ENCODE measurements at regions of chr16 and their contacts with region 1.

Region 1: GRCh38 chr16:28924732-28925385 is at the start of gene RABEP2:
- DNase-seq: peak; percentile 99
- ATAC-seq: peak; percentile 64
- H3K4me3 Mint-ChIP-seq: peak within 1 kb of the TSS; percentile 90
- H3K27ac Mint-ChIP-seq: peak within 1 kb of the TSS; percentile 96
- H3K4me1 Mint-ChIP-seq: peaks cover 54% of the 10 kb centered on the region
- H3K27me3 Mint-ChIP-seq: no peaks in the 10 kb centered on the region
- CTCF ChIP-seq: no peak
- total RNA-seq, gene RABEP2: 93.5 and 110 TPM in 2 replicates

Region 2: GRCh38 chr16:28846080-28846932 is 78.6 kb before region 1 on chr16 and contains the start of gene TUFM:
- CTCF ChIA-PET with region 1: no interaction called
- POLR2A ChIA-PET with region 1: interaction called, 31 read pairs
- intact Hi-C with region 1: loop called (anchors 1 kb)
- DNase-seq: peak; percentile 96
- ATAC-seq: peak; percentile 97
- H3K4me3 Mint-ChIP-seq: peak within 1 kb of the TSS; percentile 95
- H3K27ac Mint-ChIP-seq: peak within 1 kb of the TSS; percentile 90
- H3K4me1 Mint-ChIP-seq: peaks cover 28% of the 10 kb centered on the region
- H3K27me3 Mint-ChIP-seq: no peaks in the 10 kb centered on the region
- CTCF ChIP-seq: no peak
- total RNA-seq, gene TUFM: 189 and 206 TPM in 2 replicates

Region 3: DNA sequence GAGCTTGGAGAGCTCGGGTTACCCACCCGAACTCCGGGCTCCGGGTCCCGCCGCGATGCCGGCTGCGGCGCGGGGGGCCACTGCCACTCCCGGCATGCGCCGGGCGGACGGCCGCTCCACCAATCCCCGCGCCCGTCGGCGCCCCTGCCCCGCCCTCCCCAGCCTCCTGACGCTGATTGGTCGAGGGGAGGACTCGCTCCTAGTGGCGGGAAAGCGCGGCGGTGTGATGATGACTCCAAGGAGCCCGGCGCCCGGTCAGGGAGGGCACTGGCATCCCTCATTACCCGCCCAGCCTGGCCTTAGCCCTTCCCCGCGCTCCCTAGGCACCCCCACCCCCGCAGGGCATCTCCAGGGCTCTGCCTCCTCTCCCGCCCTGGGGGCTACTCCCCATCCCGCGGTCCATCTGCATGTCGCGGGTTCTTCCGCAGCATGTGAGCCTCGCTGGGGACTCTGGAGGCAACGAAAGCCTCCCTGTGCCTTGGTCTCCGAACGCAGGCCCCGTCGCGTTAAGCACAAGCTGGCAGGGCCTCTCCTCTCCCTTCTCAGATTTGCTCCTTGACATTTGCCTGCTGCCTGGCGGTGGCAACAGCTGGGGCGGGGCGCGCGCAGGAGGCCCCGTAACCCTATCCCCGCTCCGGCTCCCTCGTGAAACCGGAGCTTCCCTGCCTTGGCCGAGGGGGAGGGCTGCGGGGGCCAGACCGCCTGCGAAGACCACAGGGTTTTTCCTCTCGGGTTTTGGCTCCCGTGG is 44.8 kb before region 1 on chr16:
- CTCF ChIA-PET with region 1: interaction called, 10 read pairs
- POLR2A ChIA-PET with region 1: interaction called, 22 read pairs
- intact Hi-C with region 1: loop called (anchors 2 kb)
- DNase-seq: peak; percentile 71
- ATAC-seq: peak; percentile 98
- H3K4me3 Mint-ChIP-seq: peak overlapping the region; percentile 89
- H3K27ac Mint-ChIP-seq: peak overlapping the region; percentile 59
- H3K4me1 Mint-ChIP-seq: peaks cover 14% of the 10 kb centered on the region
- H3K27me3 Mint-ChIP-seq: peaks cover 5% of the 10 kb centered on the region
- CTCF ChIP-seq: no peak

Region 4: GRCh38 chr16:28935924-28936783 is 11.3 kb after region 1 on chr16:
- CTCF ChIA-PET with region 1: interaction called, 8 read pairs
- POLR2A ChIA-PET with region 1: interaction called, 192 read pairs
- intact Hi-C with region 1: loop called (anchors 1 kb)
- DNase-seq: peak; percentile 74
- ATAC-seq: peak; percentile 92
- H3K4me3 Mint-ChIP-seq: peak overlapping the region; percentile 67
- H3K27ac Mint-ChIP-seq: peak overlapping the region; percentile 77
- H3K4me1 Mint-ChIP-seq: peaks cover 59% of the 10 kb centered on the region
- H3K27me3 Mint-ChIP-seq: no peaks in the 10 kb centered on the region
- CTCF ChIP-seq: no peak

Region 5: GRCh38 chr16:28974437-28975157 is 49.7 kb after region 1 on chr16 and contains the start of gene SPNS1:
- CTCF ChIA-PET with region 1: no interaction called
- POLR2A ChIA-PET with region 1: interaction called, 18 read pairs
- intact Hi-C with region 1: no loop called
- DNase-seq: peak; percentile 91
- ATAC-seq: peak; percentile 91
- H3K4me3 Mint-ChIP-seq: peak within 1 kb of the TSS; percentile 94
- H3K27ac Mint-ChIP-seq: peak within 1 kb of the TSS; percentile 94
- H3K4me1 Mint-ChIP-seq: peaks cover 31% of the 10 kb centered on the region
- H3K27me3 Mint-ChIP-seq: no peaks in the 10 kb centered on the region
- CTCF ChIP-seq: no peak
- total RNA-seq, gene SPNS1: 26.6 and 29.2 TPM in 2 replicates

Region 6: GRCh38 chr16:29148867-29149272 is 224.0 kb after region 1 on chr16:
- CTCF ChIA-PET with region 1: no interaction called
- POLR2A ChIA-PET with region 1: no interaction called
- intact Hi-C with region 1: no loop called
- DNase-seq: no peak
- ATAC-seq: peak; percentile 73
- H3K4me3 Mint-ChIP-seq: peak overlapping the region; percentile 32
- H3K27ac Mint-ChIP-seq: no peak overlapping the region
- H3K4me1 Mint-ChIP-seq: peaks cover 17% of the 10 kb centered on the region
- H3K27me3 Mint-ChIP-seq: no peaks in the 10 kb centered on the region
- CTCF ChIP-seq: no peak

Region 7: GRCh38 chr16:29645694-29646187 is 720.9 kb after region 1 on chr16:
- CTCF ChIA-PET with region 1: no interaction called
- POLR2A ChIA-PET with region 1: no interaction called
- intact Hi-C with region 1: no loop called
- DNase-seq: no peak
- ATAC-seq: peak; percentile 42
- H3K4me3 Mint-ChIP-seq: peak overlapping the region; percentile 69
- H3K27ac Mint-ChIP-seq: peak overlapping the region; percentile 92
- H3K4me1 Mint-ChIP-seq: peaks cover 42% of the 10 kb centered on the region
- H3K27me3 Mint-ChIP-seq: no peaks in the 10 kb centered on the region
- CTCF ChIP-seq: no peak